RWPE1 (cell line): ENCODE measurements at regions of chr17 and their contacts with region 1.

Region 1: GRCh38 chr17:78781948-78782916 is at the start of gene CYTH1:
- DNase-seq: peak; percentile 98
- H3K27ac ChIP-seq: peak within 1 kb of the TSS; percentile 88
- CTCF ChIP-seq: no peak

Region 2: GRCh38 chr17:78708510-78708973 is 73.7 kb before region 1 on chr17:
- CTCF ChIA-PET with region 1: interaction called, 10 read pairs
- POLR2A ChIA-PET with region 1: no interaction called
- DNase-seq: peak; percentile 89
- H3K27ac ChIP-seq: no peak overlapping the region
- CTCF ChIP-seq: peak; percentile 96

Region 3: DNA sequence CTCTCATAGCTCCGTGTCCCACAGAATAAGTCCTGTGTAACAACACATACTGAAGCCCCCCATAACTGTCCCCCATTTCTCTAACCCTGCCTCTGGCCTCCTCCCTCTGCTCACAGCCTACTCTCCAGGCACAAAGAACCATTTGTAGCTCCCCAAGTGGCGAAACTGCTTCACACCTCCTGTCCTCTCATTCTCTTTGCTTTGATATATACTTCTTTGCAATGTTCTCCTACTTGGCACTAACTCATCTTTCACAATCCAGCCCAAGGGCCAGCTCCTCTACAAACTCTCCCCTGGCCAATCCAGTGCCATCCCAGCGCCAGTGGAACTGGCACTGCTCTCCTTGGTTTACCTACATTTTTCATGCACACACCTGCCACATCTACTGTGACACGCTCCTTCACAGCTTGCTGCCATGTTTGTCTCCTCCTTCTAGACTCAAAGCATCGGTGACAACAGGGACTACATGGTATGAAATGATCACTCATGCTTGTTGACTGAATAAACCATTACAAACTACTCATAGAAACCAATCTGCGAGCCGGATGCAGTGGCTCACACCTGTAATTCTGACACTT is 12.9 kb before region 1 on chr17:
- CTCF ChIA-PET with region 1: no interaction called
- POLR2A ChIA-PET with region 1: no interaction called
- DNase-seq: no peak
- H3K27ac ChIP-seq: no peak overlapping the region
- CTCF ChIP-seq: no peak

Region 4: DNA sequence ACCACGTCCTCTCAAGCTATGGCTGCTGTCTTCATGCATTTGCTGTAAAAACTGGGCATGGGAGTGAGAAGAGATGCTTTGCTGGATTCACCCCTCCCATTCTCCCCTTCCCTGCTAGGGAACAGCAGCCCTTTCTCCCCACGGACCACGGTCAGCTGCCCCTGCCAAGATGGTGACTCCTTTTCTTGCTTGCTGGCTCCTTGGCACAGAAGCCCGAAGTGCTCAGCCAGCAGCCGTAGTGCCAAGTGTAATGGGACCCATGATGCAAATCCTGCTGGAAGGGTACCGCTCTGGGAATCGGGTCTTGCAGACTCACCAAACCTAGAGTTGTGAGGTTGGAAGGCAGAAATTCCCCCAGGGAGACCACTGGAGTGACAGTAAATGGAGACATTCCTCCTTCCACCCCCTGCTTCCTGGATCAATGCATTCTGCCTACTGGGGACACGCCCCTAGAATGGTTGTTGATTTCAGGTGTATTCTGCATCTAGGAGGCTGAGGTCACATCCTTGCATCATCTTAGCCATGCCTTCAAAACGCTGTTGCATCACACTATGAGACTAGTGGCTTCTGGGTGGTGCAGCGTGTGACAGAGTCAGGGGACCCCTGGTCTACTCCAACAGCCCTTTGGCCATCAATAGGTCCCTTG is 1120.0 kb after region 1 on chr17:
- CTCF ChIA-PET with region 1: interaction called, 10 read pairs
- POLR2A ChIA-PET with region 1: no interaction called
- DNase-seq: no peak
- H3K27ac ChIP-seq: no peak overlapping the region
- CTCF ChIP-seq: no peak